Activated CD4-positive, alpha-beta T cell treated with anti-CD3 and anti-CD28 coated beads, Interleukin-2, amount 10 ng/mL, durations not matched to agents 24 days and 14 days (primary cell): ENCODE measurements at regions of chr3 and their contacts with region 1.

Region 1: DNA sequence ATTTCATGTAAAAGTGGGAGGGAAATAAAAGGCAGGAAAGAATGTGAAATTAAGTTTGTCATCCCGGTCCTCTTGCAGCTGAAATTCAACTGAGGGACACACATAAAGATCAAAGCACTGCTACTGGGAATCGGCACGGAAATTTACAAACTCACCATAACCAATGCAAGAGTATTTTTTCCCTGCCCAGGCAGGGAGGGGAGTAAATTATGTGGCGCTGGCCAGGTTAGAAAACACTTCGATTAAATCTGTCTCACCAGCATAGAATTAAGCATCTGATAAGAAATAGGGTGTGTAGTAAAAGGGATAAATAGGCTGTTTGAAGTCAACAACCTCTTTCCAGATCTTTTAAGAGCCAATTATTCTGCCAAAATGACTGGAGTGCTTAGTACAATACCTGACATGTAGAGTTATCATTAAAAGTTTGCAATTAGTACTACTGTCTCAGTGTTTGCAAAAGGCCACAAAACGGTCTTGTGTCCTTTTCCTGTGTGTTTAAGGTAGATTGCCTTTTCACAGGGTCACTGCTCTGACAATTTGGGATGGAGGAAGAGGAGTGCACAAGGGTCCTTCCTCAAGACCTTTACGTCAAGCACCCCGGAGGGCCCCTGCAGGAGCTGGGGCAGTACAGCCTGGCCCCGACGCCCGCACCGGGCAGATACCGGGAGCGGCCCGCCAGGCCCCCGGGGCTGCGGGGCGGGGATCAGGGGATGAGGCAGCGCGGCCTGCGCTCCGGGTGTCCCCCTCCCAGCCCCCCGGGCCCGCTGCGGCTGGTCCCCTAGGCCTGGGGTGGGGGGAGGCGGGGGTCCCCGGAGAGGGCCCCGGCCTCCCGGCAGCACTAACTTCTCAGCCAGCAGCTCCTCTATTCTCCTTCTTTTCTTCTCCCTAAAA is 651 bp downstream of the UBA3 start:
- DNase-seq: peak; percentile 77
- H3K4me3 Mint-ChIP-seq: peak overlapping the region; percentile 90
- H3K27ac Mint-ChIP-seq: peak overlapping the region; percentile 76
- H3K4me1 Mint-ChIP-seq: peaks cover 50% of the 10 kb centered on the region
- H3K27me3 Mint-ChIP-seq: no peaks in the 10 kb centered on the region

Region 2: GRCh38 chr3:69065318-69065964 is 14.1 kb before region 1 on chr3:
- intact Hi-C with region 1: loop called (anchors 2 kb)
- DNase-seq: peak; percentile 76
- H3K4me3 Mint-ChIP-seq: peak overlapping the region; percentile 64
- H3K27ac Mint-ChIP-seq: peak overlapping the region; percentile 74
- H3K4me1 Mint-ChIP-seq: peaks cover 38% of the 10 kb centered on the region
- H3K27me3 Mint-ChIP-seq: no peaks in the 10 kb centered on the region